Activated B cell treated with CpG ODN at 0.5 μM for 24 hours (primary cell): ENCODE measurements at regions of chr1 and their contacts with region 1.

Region 1: GRCh38 chr1:999725-1000356 is at the start of gene HES4:
- DNase-seq: peak; percentile 60
- ATAC-seq: peak; percentile 64
- H3K4me3 Mint-ChIP-seq: peak within 1 kb of the TSS; percentile 75
- H3K27ac Mint-ChIP-seq: no peak within 1 kb of the TSS
- H3K4me1 Mint-ChIP-seq: peaks cover 19% of the 10 kb centered on the region
- H3K27me3 Mint-ChIP-seq: peaks cover 27% of the 10 kb centered on the region
- CTCF ChIP-seq: no peak
- total RNA-seq, gene HES4: 0.67 and 1.2 TPM in 2 replicates

Region 2: GRCh38 chr1:983799-984473 is 15.9 kb before region 1 on chr1:
- CTCF ChIA-PET with region 1: interaction called, 8 read pairs
- POLR2A ChIA-PET with region 1: no interaction called
- intact Hi-C with region 1: loop called (anchors 1 kb)
- DNase-seq: peak; percentile 66
- ATAC-seq: peak; percentile 95
- H3K4me3 Mint-ChIP-seq: no peak overlapping the region
- H3K27ac Mint-ChIP-seq: no peak overlapping the region
- H3K4me1 Mint-ChIP-seq: no peaks in the 10 kb centered on the region
- H3K27me3 Mint-ChIP-seq: peaks cover 23% of the 10 kb centered on the region
- CTCF ChIP-seq: peak; percentile 39

Region 3: GRCh38 chr1:1013105-1013921 is 13.5 kb after region 1 on chr1 and contains the start of gene ISG15:
- CTCF ChIA-PET with region 1: interaction called, 14 read pairs
- POLR2A ChIA-PET with region 1: interaction called, 10 read pairs
- intact Hi-C with region 1: loop called (anchors 1 kb)
- DNase-seq: peak; percentile 77
- ATAC-seq: peak; percentile 94
- H3K4me3 Mint-ChIP-seq: peak within 1 kb of the TSS; percentile 98
- H3K27ac Mint-ChIP-seq: peak within 1 kb of the TSS; percentile 97
- H3K4me1 Mint-ChIP-seq: peaks cover 30% of the 10 kb centered on the region
- H3K27me3 Mint-ChIP-seq: peaks cover 5% of the 10 kb centered on the region
- CTCF ChIP-seq: no peak
- total RNA-seq, gene ISG15: 25.8 and 28.9 TPM in 2 replicates

Region 4: DNA sequence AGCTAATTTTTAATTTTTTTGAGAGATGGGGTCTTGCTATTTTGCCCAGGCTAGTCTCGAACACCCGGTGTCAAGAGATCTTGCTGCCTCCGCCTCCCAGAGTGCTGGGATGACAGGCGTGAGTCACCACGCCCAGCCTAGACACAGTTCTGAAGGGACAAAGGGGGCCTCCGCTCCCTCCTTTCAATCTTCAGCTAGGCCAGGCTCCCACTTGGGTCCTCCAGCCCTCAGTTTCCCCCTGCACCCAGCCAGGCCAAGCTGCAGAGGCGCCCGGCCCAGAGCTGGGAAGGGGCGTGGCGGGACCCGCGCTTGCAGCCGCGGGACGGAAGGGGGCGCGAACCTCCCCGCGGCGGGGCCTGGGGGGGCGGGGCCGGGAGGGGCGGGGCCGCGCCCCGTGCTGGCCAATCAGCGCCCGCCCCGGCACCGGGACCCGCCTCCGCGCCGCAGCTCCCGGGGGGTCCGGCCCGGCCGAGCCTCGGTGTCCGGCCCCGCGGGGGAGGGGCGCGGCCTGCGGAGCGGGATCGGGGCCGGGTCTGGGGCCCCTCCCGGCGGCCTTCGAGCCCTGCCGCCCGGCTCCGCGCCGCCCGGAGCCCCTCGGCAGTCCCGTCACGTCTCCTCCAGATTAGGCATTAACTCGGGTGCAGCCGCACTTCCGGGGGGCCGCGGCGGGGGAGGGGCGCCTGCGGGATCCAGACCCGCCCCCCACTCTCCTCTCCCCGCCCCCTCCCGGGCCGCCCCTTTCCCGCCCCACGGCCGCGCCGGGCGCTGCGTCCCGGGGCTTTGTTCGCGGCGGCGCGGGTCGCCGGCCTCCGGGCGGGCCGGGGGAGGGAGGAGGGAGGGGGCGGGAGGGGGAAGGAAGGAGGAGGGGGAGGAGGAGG is 19.5 kb after region 1 on chr1:
- CTCF ChIA-PET with region 1: interaction called, 14 read pairs
- POLR2A ChIA-PET with region 1: interaction called, 4 read pairs
- intact Hi-C with region 1: loop called (anchors 2 kb)
- DNase-seq: peak; percentile 84
- ATAC-seq: peak; percentile 87
- H3K4me3 Mint-ChIP-seq: peak overlapping the region; percentile 72
- H3K27ac Mint-ChIP-seq: no peak overlapping the region
- H3K4me1 Mint-ChIP-seq: peaks cover 14% of the 10 kb centered on the region
- H3K27me3 Mint-ChIP-seq: peaks cover 4% of the 10 kb centered on the region
- CTCF ChIP-seq: no peak

Region 5: GRCh38 chr1:1435106-1435903 is 435.5 kb after region 1 on chr1 and contains the start of gene VWA1:
- CTCF ChIA-PET with region 1: no interaction called
- POLR2A ChIA-PET with region 1: interaction called, 11 read pairs
- intact Hi-C with region 1: no loop called
- DNase-seq: peak; percentile 79
- ATAC-seq: peak; percentile 88
- H3K4me3 Mint-ChIP-seq: peak within 1 kb of the TSS; percentile 41
- H3K27ac Mint-ChIP-seq: no peak within 1 kb of the TSS
- H3K4me1 Mint-ChIP-seq: peaks cover 17% of the 10 kb centered on the region
- H3K27me3 Mint-ChIP-seq: peaks cover 12% of the 10 kb centered on the region
- CTCF ChIP-seq: no peak
- total RNA-seq, gene VWA1: not detected in 2 replicates